Activated CD8-positive, alpha-beta T cell treated with anti-CD3 and anti-CD28 coated beads, Interleukin-2, amount 10 ng/mL, durations not matched to agents 7 days and 5 days (primary cell): ENCODE measurements at regions of chr11 and their contacts with region 1.

Region 1: DNA sequence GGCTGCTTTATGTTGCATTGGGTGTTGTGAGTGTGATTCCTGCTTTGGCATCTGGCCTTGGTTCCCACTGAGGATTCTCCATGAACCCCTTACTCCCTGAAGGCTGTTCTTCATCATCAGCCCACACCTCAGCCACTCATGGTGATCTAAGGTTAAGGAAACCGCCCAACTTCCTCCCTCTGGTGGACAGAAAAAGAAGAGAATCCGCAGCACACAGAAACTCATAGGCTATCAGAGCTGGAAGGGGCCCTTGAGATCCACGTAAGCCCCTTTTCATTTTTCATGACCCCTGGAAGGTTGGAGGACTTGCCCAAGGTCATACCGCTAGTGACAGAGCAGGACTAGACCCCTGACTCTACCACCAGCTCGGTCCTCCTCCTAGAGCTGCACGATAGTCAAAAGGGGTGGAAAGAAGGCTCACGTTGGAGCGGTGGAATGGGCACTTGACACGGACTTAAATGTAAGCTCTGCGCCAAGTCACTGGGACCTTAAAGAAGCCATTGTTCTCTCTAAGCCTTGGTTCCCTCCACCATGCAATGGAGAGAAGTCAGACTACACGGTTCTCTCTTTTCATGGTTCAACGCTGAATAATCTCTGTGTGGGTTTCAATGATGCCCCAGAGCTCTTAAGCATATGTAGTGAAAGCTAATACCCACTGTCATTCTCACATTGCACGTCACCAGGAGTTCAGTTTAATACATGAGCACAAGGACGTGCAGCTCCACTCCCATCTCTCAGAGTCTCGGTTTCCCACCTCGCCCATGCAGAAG is 83.6 kb upstream of the CRTAM start:
- DNase-seq: peak; percentile 66
- ATAC-seq: peak; percentile 35
- H3K4me3 Mint-ChIP-seq: no peak overlapping the region
- H3K27ac Mint-ChIP-seq: peak overlapping the region; percentile 79
- H3K4me1 Mint-ChIP-seq: peaks cover 89% of the 10 kb centered on the region
- H3K27me3 Mint-ChIP-seq: peaks cover 2% of the 10 kb centered on the region

Region 2: DNA sequence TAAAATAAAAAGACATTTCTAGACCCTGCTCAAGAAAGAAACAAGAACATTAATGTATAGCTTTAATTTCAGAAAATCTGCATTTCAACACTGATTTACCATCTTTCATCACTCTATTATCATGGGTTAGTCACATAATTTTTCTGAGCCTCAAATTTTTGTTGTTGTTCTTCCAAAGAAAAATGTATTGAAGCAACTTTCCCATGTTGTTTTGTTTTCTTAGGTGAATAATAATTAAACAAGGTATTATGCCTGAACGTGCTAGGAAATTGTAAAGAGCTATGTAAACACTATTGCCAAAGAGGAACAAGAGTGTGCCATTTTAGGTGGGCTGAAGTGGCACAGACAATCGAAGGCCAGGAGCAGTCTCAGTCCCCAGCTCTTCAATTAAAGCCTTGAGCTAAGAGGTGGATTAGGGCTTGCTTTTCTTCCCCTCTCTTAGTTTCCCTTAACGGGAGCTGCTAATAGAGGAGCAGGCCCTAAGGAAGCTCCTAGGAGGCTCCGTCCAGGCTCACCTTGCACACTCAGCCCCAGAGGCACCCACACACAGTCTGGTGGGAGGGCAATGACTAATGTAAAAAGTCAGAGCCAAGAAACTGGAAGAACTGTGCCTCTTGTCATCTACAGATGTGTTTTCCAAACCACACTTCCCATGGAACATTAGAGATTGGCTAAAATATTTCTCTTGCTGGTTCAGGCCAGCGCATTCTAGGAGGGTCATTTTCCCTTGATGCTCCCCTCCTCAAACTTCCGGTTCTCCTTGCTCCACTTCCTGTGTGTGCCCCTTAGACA is 108.0 kb before region 1 on chr11:
- CTCF ChIA-PET with region 1: interaction called, 30 read pairs
- POLR2A ChIA-PET with region 1: interaction called, 3 read pairs
- DNase-seq: no peak
- ATAC-seq: no peak
- H3K4me3 Mint-ChIP-seq: no peak overlapping the region
- H3K27ac Mint-ChIP-seq: no peak overlapping the region
- H3K4me1 Mint-ChIP-seq: peaks cover 17% of the 10 kb centered on the region
- H3K27me3 Mint-ChIP-seq: peaks cover 8% of the 10 kb centered on the region

Region 3: DNA sequence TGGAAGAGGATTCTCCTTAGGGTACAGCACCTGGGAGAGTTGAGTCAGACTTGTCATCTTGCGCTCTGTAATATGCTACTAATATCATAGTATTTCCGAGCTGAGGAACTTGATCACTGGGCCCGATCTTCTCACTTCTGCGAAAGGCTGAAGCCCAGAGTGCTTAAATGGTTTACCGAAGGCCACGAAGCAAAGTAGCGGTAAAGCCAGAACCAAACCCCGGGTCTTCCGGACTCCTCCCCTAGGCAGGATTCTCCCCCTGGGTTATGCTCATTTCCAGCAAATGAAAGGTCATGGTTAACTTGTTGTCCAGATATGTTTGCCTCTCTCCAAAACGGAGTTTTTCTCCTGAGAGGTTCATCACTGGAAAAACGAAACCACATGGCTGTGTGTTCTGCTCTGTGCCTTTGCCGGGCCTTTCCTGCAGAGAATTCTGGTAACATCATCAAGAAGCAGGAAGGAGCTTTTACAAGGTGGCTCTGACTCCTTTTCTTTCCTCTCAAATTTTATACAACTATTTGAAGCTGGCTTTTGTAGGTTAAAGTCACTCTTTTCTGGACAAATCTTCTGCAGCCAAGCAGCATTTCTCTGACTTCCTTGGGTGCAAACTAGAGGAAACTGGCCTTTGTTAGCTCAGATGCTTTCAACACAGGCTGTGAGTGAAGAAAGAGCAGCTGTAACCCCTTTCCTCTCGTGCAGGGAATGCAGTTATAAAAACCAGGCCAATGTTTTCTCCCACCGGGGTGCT is 63.8 kb before region 1 on chr11:
- CTCF ChIA-PET with region 1: interaction called, 131 read pairs
- POLR2A ChIA-PET with region 1: interaction called, 7 read pairs
- DNase-seq: peak; percentile 40
- ATAC-seq: peak; percentile 54
- H3K4me3 Mint-ChIP-seq: peak overlapping the region; percentile 73
- H3K27ac Mint-ChIP-seq: peak overlapping the region; percentile 86
- H3K4me1 Mint-ChIP-seq: peaks cover 79% of the 10 kb centered on the region
- H3K27me3 Mint-ChIP-seq: no peaks in the 10 kb centered on the region

Region 4: DNA sequence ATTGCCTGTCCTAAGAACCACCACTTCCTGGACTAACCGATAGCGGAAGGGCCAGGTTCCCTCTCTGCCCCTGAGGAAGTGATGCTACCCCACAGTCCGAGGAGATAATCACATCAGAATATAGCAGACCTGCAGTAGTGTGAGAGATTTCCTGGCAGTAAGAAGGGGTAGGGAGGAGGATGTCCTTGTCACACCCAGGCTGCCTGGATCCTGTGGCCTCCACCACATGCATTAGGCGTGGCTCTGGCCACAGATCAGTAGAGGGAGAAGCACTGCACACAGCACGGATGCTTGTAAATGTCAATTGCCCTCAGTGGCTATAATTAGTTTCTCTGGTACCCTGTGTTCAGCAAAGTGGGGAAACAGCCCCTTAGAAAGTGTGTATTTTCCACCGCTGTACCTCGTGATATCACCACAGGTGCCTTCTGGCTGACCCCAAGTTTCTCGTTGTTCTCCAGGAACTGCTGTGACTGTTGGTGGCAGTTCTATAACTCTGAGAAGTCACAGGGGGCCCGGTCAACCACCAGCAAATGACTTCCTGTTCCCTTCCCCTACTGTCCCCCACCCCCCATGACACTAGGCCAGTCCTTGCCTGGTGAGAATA is 37.4 kb before region 1 on chr11:
- CTCF ChIA-PET with region 1: interaction called, 65 read pairs
- POLR2A ChIA-PET with region 1: interaction called, 8 read pairs
- DNase-seq: peak; percentile 93
- ATAC-seq: peak; percentile 88
- H3K4me3 Mint-ChIP-seq: peak overlapping the region; percentile 67
- H3K27ac Mint-ChIP-seq: peak overlapping the region; percentile 96
- H3K4me1 Mint-ChIP-seq: peaks cover 95% of the 10 kb centered on the region
- H3K27me3 Mint-ChIP-seq: no peaks in the 10 kb centered on the region

Region 5: GRCh38 chr11:122743949-122744348 is 10.8 kb before region 1 on chr11:
- CTCF ChIA-PET with region 1: interaction called, 108 read pairs
- POLR2A ChIA-PET with region 1: interaction called, 4 read pairs
- DNase-seq: peak; percentile 88
- ATAC-seq: peak; percentile 83
- H3K4me3 Mint-ChIP-seq: no peak overlapping the region
- H3K27ac Mint-ChIP-seq: no peak overlapping the region
- H3K4me1 Mint-ChIP-seq: peaks cover 18% of the 10 kb centered on the region
- H3K27me3 Mint-ChIP-seq: no peaks in the 10 kb centered on the region

Region 6: GRCh38 chr11:122781378-122782195 is 26.8 kb after region 1 on chr11:
- CTCF ChIA-PET with region 1: interaction called, 91 read pairs
- POLR2A ChIA-PET with region 1: no interaction called
- DNase-seq: peak; percentile 80
- ATAC-seq: peak; percentile 89
- H3K4me3 Mint-ChIP-seq: no peak overlapping the region
- H3K27ac Mint-ChIP-seq: no peak overlapping the region
- H3K4me1 Mint-ChIP-seq: peaks cover 33% of the 10 kb centered on the region
- H3K27me3 Mint-ChIP-seq: no peaks in the 10 kb centered on the region

Region 7: DNA sequence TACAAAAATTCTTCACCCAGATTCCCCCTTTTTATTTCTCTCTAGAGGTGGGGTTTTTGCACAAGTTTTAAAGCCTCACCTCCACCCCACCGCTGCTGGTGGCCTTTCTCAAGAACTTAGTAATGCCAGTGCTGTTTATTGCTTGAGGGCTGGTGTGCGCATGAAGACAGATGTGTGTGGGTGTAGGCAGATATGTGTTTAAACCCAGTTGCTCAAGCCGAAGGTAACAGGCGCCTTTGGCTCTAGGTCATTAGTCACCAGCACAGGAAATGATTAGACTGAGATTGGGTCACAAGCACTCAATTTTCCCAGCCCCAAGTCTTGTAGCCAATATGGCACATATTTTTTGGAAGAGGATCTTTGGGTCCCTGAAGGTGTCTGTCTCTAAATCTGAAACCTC is 443.0 kb after region 1 on chr11:
- CTCF ChIA-PET with region 1: no interaction called
- POLR2A ChIA-PET with region 1: no interaction called
- DNase-seq: no peak
- ATAC-seq: no peak
- H3K4me3 Mint-ChIP-seq: no peak overlapping the region
- H3K27ac Mint-ChIP-seq: no peak overlapping the region
- H3K4me1 Mint-ChIP-seq: peaks cover 15% of the 10 kb centered on the region
- H3K27me3 Mint-ChIP-seq: peaks cover 65% of the 10 kb centered on the region